Sigmoid colon (tissue), 7 donors: ENCODE measurements at regions of chr15 and their contacts with region 1.

Region 1: GRCh38 chr15:70196314-70197291 is 98.9 kb upstream of the TLE3 start:
- DNase-seq: peak; percentile 80
- H3K4me3 ChIP-seq: no peak overlapping the region
- H3K27ac ChIP-seq: peak overlapping the region; percentile 31 to 85 (median 80)
- H3K4me1 ChIP-seq: peaks cover 0 to 48% (median 39%) of the 10 kb centered on the region in 4 donors
- H3K27me3 ChIP-seq: no peaks in the 10 kb centered on the region
- CTCF ChIP-seq: no peak
- EP300 ChIP-seq: no peak
- POLR2A ChIP-seq: no peak

Region 2: GRCh38 chr15:69784798-69785566 is 411.6 kb before region 1 on chr15:
- intact Hi-C with region 1: no loop called
- DNase-seq: no peak
- H3K4me3 ChIP-seq: no peak overlapping the region
- H3K27ac ChIP-seq: peak overlapping the region in 1 of 4 donors; percentile 14
- H3K4me1 ChIP-seq: peaks cover 0 to 8% (median 3%) of the 10 kb centered on the region in 4 donors
- H3K27me3 ChIP-seq: no peaks in the 10 kb centered on the region
- CTCF ChIP-seq: no peak
- EP300 ChIP-seq: no peak
- POLR2A ChIP-seq: no peak

Region 3: GRCh38 chr15:69939513-69940440 is 256.8 kb before region 1 on chr15:
- intact Hi-C with region 1: no loop called
- DNase-seq: no peak
- H3K4me3 ChIP-seq: no peak overlapping the region
- H3K27ac ChIP-seq: no peak overlapping the region
- H3K4me1 ChIP-seq: no peaks in the 10 kb centered on the region
- H3K27me3 ChIP-seq: peaks cover 0 to 4% (median 0%) of the 10 kb centered on the region in 3 donors
- CTCF ChIP-seq: no peak
- EP300 ChIP-seq: no peak
- POLR2A ChIP-seq: no peak

Region 4: DNA sequence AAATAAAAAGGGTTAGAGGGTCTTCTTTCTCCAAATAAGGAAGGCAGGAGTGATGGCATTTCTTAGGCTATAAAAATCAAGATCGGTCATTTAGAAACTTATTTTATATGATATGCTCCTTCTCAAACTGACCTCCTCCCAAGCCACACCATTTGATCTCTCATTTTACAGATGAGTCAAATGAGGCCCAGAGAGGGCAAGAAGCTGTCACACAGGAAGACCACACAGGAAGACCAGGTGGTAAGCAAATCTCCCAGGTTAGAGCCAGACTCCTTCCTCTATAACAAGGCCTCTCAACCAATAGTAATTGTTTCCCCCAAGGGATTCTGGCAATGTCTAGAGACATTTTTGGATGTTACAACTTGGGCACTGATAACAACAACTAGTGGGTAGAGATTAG is 112.7 kb before region 1 on chr15:
- intact Hi-C with region 1: no loop called
- DNase-seq: no peak
- H3K4me3 ChIP-seq: no peak overlapping the region
- H3K27ac ChIP-seq: peak overlapping the region in 1 of 4 donors; percentile 32
- H3K4me1 ChIP-seq: peaks cover 0 to 61% (median 37%) of the 10 kb centered on the region in 4 donors
- H3K27me3 ChIP-seq: no peaks in the 10 kb centered on the region
- CTCF ChIP-seq: no peak
- EP300 ChIP-seq: no peak
- POLR2A ChIP-seq: no peak

Region 5: DNA sequence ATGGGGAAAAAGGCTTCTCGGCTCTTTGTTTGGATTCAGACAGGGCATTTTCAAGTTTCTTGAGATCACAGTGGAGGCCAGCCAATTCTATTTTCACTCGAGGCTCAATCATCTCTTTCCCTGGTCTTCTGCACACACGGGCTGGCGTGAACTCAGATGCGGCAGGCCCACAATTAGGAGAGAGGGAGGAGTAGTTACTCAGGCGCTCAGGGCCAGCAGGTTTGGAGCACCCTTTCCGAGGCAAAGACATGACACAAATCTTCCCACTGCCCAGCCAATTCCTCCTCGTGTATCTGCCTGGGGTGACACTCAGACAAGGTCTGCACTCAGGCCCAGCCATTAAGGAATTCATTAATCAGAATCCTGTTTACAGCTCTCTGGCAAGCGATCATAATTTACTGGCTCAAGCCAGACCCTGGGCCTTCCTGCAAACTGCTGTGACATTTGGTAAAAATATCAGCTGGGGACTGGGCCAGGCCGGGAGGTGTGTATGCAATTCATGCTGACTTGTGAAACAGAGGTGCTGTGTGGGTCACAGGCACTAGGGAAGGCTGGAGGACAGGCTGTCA is 30.8 kb before region 1 on chr15:
- intact Hi-C with region 1: loop called (anchors 2 kb)
- DNase-seq: peak; percentile 90
- H3K4me3 ChIP-seq: no peak overlapping the region
- H3K27ac ChIP-seq: peak overlapping the region; percentile 69 to 82 (median 72)
- H3K4me1 ChIP-seq: peaks cover 0 to 39% (median 35%) of the 10 kb centered on the region in 4 donors
- H3K27me3 ChIP-seq: no peaks in the 10 kb centered on the region
- CTCF ChIP-seq: no peak
- EP300 ChIP-seq: no peak
- POLR2A ChIP-seq: no peak

Region 6: DNA sequence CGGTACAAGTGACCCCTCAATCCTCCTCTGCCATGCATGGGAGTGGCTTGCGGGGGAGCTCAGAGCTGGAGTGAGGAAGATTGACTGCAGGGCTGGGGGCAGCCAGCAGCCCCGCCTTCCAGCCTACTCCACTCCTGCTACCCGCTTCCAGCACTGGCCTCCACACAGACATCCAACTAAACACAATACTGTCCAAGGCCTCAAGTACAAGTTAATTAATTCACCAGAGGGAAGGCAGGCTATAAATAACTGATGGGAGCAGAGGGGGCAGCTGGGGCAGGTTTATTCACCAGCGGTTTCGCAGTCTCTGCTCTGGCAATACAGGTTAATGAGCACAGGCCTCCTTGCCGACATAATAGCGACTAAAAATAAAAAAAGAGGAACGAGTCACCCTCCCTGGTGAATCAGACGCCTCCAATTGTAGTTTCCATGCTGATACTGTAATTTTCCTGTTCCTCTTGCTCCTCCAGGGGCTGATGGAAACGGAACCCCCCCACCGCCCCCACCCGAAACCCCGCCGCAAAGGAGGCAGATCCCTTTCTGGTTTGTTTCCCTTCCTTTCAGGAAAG is 67.5 kb after region 1 on chr15:
- intact Hi-C with region 1: loop called (anchors 10 kb)
- DNase-seq: peak; percentile 84
- H3K4me3 ChIP-seq: no peak overlapping the region
- H3K27ac ChIP-seq: peak overlapping the region; percentile 22 to 74 (median 54)
- H3K4me1 ChIP-seq: peaks cover 0 to 69% (median 49%) of the 10 kb centered on the region in 4 donors
- H3K27me3 ChIP-seq: no peaks in the 10 kb centered on the region
- CTCF ChIP-seq: no peak
- EP300 ChIP-seq: peak in 3 of 4 donors; percentile 6 to 28 (median 23)
- POLR2A ChIP-seq: no peak